Activated CD4-positive, alpha-beta T cell treated with anti-CD3 and anti-CD28 coated beads, Interleukin-2, amount 10 ng/mL, durations not matched to agents 24 days and 14 days (primary cell): ENCODE measurements at regions of chr2 and their contacts with region 1.

Region 1: DNA sequence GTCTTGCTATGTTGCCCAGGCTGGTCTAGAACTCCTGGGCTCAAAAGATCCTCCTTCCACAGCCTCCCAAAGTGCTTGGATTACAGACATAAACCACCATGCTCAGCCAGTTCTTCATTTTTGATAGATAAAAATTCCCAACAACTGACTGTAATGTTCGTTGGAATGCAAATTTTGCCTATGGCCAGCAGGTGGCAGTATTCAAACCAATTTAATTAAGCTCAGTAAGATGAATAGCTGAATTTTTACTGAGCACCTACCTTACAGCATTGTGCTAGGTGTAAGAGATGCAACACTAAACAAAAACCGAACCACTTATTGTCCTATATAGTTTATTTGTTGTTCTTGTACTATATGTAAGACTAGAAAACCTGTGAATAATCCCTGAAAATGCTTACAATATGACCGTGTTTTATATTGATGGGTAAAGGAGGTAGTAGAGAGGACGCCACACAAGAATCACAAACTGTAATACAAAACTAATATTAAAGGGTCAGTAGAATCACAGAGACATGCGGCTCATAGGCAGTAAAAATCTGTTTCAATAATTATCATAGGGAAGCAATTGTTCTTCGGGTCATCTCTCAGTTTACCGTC is 8.2 kb upstream of the TMEM182 start:
- DNase-seq: peak; percentile 75
- H3K4me3 Mint-ChIP-seq: no peak overlapping the region
- H3K27ac Mint-ChIP-seq: no peak overlapping the region
- H3K4me1 Mint-ChIP-seq: no peaks in the 10 kb centered on the region
- H3K27me3 Mint-ChIP-seq: peaks cover 4% of the 10 kb centered on the region

Region 2: GRCh38 chr2:102806250-102806837 is 52.7 kb after region 1 on chr2:
- intact Hi-C with region 1: loop called (anchors 1 kb)
- DNase-seq: peak; percentile 83
- H3K4me3 Mint-ChIP-seq: no peak overlapping the region
- H3K27ac Mint-ChIP-seq: no peak overlapping the region
- H3K4me1 Mint-ChIP-seq: peaks cover 12% of the 10 kb centered on the region
- H3K27me3 Mint-ChIP-seq: peaks cover 6% of the 10 kb centered on the region